Ovary (tissue), 10 donors: ENCODE measurements at regions of chr20 and their contacts with region 1.

Region 1: DNA sequence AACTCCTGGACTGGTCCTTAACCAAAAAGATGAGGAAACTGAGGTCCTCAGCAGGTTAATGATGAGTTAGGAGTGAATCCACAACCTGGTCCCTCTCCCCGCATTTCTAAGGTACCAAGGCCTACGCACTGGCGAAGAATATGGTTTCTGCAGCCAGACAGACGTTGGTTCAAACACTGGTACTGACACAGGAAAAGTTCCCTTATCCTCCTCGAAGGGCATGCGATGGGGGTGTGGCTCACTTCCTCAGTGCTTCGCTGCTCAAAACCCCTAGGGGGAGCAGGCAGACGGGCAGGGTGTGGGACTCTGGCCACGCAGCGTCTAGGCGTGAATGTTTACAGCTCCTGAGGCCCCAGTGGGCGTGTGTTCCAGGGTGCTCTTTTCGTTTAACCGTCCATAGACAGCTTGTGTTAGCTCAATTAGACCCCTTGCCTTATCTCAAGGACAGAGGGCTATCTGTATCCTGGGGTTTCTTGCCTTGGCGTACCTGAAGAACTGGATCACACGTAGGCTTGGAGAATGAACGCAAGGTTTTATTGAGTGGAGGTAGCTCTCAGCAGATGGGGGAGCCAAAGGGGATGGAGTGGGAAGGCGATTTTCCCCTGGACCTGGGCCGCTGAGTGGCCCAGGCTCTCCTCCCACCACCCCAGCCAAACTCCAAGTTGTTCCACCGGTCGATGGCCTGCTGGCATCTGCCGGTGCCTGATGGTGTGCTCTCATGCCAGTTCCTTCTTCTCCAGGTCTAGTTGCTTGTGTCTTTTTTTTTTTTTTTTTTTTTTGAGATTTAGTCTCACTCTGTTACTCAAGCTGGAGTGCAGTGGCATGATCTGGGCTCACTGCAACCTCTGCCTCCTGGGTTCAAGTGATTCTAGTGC is 31.8 kb upstream of the PTPN1 start:
- DNase-seq: peak in 4 of 5 donors; percentile 27 to 50 (median 39)
- H3K4me3 ChIP-seq: no peak overlapping the region
- H3K27ac ChIP-seq: no peak overlapping the region
- H3K4me1 ChIP-seq: peaks cover under 1% of the 10 kb centered on the region
- H3K27me3 ChIP-seq: no peaks in the 10 kb centered on the region
- CTCF ChIP-seq: peak in 1 of 3 donors; percentile 15
- EP300 ChIP-seq: no peak
- POLR2A ChIP-seq: no peak

Region 2: GRCh38 chr20:50303573-50304501 is 174.6 kb before region 1 on chr20:
- intact Hi-C with region 1: no loop called
- DNase-seq: peak; percentile 86 to 93 (median 89)
- H3K4me3 ChIP-seq: no peak overlapping the region
- H3K27ac ChIP-seq: peak overlapping the region; percentile 84 to 97
- H3K4me1 ChIP-seq: peaks cover 30% of the 10 kb centered on the region
- H3K27me3 ChIP-seq: no peaks in the 10 kb centered on the region
- CTCF ChIP-seq: no peak
- EP300 ChIP-seq: no peak
- POLR2A ChIP-seq: peak; percentile 12

Region 3: GRCh38 chr20:50588034-50588611 is 109.7 kb after region 1 on chr20:
- intact Hi-C with region 1: loop called in 1 of 4 experiments (anchors 10 kb)
- DNase-seq: peak; percentile 67 to 85 (median 78)
- H3K4me3 ChIP-seq: no peak overlapping the region
- H3K27ac ChIP-seq: no peak overlapping the region
- H3K4me1 ChIP-seq: peaks cover 6% of the 10 kb centered on the region
- H3K27me3 ChIP-seq: no peaks in the 10 kb centered on the region
- CTCF ChIP-seq: peak; percentile 60 to 74 (median 72)
- EP300 ChIP-seq: no peak
- POLR2A ChIP-seq: no peak

Region 4: DNA sequence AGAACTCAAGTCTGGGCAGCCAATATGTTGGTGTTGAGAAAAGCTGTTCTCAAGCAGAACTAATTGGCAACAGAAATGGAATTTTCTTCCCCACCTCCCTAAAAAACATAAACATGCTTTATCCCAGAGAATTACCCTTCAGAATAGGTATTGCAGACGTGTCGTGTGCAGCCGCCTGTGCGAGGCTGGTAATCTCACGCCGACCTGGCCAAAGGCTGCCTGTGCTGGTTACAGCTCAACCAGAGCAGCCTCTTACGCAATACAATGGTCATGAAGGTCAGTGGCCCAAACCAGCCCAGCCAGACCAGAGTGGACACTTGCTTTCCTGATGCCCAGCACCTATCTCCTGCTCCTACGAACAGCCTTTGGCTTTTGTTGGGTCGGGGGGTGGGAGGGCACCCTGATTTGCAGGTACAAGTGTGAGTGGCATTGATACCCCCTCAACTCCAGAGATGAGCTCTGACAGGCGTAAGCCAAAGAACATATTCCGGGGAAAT is 202.1 kb after region 1 on chr20:
- intact Hi-C with region 1: no loop called
- DNase-seq: peak; percentile 65 to 85 (median 77)
- H3K4me3 ChIP-seq: no peak overlapping the region
- H3K27ac ChIP-seq: peak overlapping the region in 1 of 2 donors; percentile 49
- H3K4me1 ChIP-seq: peaks cover 17% of the 10 kb centered on the region
- H3K27me3 ChIP-seq: no peaks in the 10 kb centered on the region
- CTCF ChIP-seq: no peak
- EP300 ChIP-seq: no peak
- POLR2A ChIP-seq: no peak